Dorsolateral prefrontal cortex (tissue), 120 donors: ENCODE measurements at regions of chr10 and their contacts with region 1.

Region 1: GRCh38 chr10:7872041-7872442 is 53.7 kb downstream of the TAF3 start:
- DNase-seq: no peak
- H3K4me3 ChIP-seq: peak overlapping the region in 55 of 59 donors; percentile 4 to 61 (median 43)
- H3K27ac ChIP-seq: no peak overlapping the region
- H3K27me3 ChIP-seq: no peaks in the 10 kb centered on the region
- CTCF ChIP-seq: peak; percentile 66 to 97 (median 87)

Region 2: GRCh38 chr10:7967035-7967434 is 95.0 kb after region 1 on chr10:
- intact Hi-C with region 1: no loop called
- DNase-seq: no peak
- H3K4me3 ChIP-seq: no peak overlapping the region
- H3K27ac ChIP-seq: no peak overlapping the region
- H3K27me3 ChIP-seq: no peaks in the 10 kb centered on the region
- CTCF ChIP-seq: no peak

Region 3: DNA sequence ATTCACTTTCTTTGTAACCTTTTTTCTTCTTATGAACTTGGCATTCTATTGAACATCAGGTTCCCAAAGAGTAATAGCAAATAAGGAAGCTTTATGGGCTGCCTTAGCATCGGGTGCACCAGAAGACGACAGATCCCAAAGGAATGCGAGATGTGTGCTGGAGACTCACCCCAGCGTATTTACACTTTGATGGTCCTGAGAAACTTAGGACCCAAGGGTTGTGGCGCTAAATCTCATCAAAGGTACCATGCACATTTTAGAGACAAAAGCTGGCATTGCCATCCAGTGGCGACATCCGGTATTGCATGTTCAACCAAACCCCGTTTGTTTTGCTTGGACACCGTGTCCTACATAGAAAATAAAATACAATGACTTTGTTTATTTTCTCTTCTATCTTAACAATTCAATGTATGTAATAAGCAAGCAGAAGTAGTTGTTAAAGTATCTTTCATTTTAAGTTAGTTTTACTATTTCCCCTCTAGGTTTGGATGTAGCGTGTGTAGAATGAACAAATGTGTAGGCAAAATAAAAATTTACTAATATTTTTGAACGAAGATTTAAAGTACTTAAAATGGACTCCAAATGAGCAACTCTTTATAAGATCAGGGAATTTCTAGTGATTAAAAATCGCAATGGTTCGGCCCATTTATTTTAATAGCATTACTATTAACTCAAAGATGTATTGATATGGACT is 1337.2 kb after region 1 on chr10:
- intact Hi-C with region 1: loop called (anchors 2 to 5 kb)
- DNase-seq: peak; percentile 46 to 77 (median 62)
- H3K4me3 ChIP-seq: peak overlapping the region in 1 of 59 donors; percentile 20
- H3K27ac ChIP-seq: no peak overlapping the region
- H3K27me3 ChIP-seq: peaks cover 0 to 20% (median 0%) of the 10 kb centered on the region in 45 donors
- CTCF ChIP-seq: peak; percentile 77 to 98 (median 92)

Region 4: DNA sequence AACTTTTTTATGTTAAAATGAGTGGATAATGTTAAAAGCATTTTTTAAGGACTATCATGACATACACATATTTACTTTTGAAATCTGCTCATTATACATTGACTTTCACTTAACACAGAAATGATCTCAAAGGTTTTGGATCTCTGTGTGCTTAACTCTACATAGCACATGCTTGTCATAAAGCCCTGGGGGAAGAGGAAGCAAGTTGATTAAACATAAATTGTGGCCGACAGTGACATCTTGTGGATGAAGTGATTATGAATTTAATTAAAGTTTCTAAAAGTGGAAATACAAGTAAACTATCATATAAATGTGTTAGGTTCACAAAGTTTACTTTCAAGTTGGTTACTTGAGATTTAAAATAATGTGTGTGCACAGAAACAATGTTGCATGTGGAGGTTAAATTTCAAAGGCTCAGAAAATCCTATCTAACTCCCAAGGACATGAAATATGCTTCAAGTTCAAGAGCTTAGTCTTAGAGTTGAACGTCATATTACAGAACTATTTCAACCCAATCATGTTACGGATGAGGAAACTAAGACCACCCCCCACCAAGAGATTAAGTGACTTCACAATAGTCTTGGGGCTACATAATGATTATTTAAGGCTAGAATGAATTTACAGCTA is 1430.2 kb after region 1 on chr10:
- intact Hi-C with region 1: loop called (anchors 5 kb)
- DNase-seq: peak in 1 of 10 donors; percentile 9
- H3K4me3 ChIP-seq: no peak overlapping the region
- H3K27ac ChIP-seq: no peak overlapping the region
- H3K27me3 ChIP-seq: peaks cover 0 to 11% (median 0%) of the 10 kb centered on the region in 45 donors
- CTCF ChIP-seq: peak; percentile 40 to 87 (median 69)